ENCODE measurements at regions of chr7 and their contacts with region 1.

Region 1: DNA sequence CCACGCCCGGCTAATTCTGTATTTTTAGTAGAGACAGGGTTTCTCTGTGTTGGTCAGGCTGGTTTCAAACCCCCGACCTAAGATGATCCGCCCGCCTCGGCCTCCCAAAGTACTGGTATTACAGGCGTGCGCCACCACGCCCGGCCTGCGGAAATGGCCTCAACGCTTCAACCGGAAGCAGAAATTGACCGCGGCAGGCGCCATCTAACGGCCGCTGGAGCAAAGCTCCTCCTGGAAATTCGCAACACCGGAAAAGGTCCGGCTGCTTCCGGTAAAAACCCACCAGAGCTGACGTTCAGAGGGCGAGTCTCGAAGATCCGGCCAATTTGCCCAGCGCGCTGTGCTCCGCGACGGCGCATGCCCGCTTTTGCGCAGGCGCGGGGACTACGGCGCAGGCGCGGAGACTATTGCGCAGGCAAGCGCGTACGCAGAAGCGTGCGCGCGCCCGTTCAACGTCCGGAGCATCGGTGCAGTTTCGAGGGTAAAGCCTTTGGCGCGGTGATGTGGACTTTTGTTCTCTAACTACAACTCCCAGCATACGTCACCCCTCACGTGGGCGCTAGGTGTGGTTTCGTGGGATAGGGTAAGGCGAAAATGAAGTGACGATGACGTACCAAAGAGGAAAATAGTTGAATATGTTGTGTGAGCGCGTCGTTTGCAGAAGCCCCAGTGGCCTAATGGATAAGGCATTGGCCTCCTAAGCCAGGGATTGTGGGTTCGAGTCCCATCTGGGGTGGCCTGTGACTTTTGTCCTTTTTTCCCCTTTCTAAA is 915 bp upstream of the FMC1 start:
- DNase-seq: peak; percentile 96 to 100 (median 96)
- ATAC-seq: peak; percentile 83
- H3K4me3 ChIP-seq: peak overlapping the region; percentile 81
- H3K27ac ChIP-seq: peak overlapping the region; percentile 99
- H3K4me1 ChIP-seq: peaks cover 4% of the 10 kb centered on the region in 2 experiments; a peak in 2 of 5 replicates
- H3K27me3 ChIP-seq: no peaks in the 10 kb centered on the region
- CTCF ChIP-seq: peak; percentile 93 to 95 (median 93)
- EP300 ChIP-seq: peak; percentile 81
- POLR2A ChIP-seq: peak; percentile 89
- RAD21 ChIP-seq: peak; percentile 27 to 50; a peak in 3 of 4 replicates

Region 2: DNA sequence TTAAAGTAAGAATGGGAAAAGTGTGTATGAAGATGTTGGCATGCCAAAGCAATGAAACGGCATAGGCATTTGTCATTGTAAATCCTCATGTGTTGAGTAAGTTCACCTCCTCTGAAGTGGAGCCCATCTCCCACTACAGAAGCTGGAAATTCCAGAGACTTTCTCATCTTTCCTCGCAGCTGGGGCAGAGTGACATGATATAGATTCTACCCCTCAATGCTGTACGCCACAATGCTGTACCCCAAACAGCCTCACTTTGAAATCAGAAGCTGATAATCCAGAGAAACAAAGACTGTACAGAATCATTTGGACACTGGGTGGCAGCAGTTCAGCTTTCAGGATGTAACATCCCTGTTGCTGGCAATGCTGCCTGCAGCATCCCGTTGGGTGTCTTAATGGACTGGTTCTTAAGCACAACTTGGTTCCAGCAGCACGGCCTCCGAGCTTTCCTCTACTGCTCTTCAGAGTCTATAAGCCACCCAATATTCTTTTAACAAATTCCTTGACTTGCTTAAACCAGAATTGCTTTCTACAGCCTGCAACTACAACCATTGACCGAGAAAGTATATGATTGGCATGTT is 323.2 kb before region 1 on chr7:
- CTCF ChIA-PET with region 1: no interaction called
- POLR2A ChIA-PET with region 1: interaction called, 3 read pairs
- in situ Hi-C with region 1: no loop called
- intact Hi-C with region 1: loop called (anchors 5 kb)
- DNase-seq: peak; percentile 81 to 87 (median 84)
- ATAC-seq: peak; percentile 97
- H3K4me3 ChIP-seq: no peak overlapping the region
- H3K27ac ChIP-seq: no peak overlapping the region
- H3K4me1 ChIP-seq: no peaks in the 10 kb centered on the region
- H3K27me3 ChIP-seq: peaks cover 25 to 27% of the 10 kb centered on the region in 2 experiments
- CTCF ChIP-seq: peak; percentile 88 to 97 (median 91)
- EP300 ChIP-seq: no peak
- POLR2A ChIP-seq: no peak
- RAD21 ChIP-seq: peak; percentile 93 to 98

Region 3: GRCh38 chr7:139109188-139109982 is 230.8 kb before region 1 on chr7 and contains the start of gene ZC3HAV1:
- CTCF ChIA-PET with region 1: no interaction called
- POLR2A ChIA-PET with region 1: no interaction called
- in situ Hi-C with region 1: no loop called
- intact Hi-C with region 1: loop called (anchors 2 kb)
- DNase-seq: peak; percentile 85 to 94 (median 90)
- ATAC-seq: peak; percentile 91
- H3K4me3 ChIP-seq: peak within 1 kb of the TSS; percentile 87
- H3K27ac ChIP-seq: peak within 1 kb of the TSS; percentile 88
- H3K4me1 ChIP-seq: peaks cover 19 to 44% of the 10 kb centered on the region in 2 experiments
- H3K27me3 ChIP-seq: no peaks in the 10 kb centered on the region
- CTCF ChIP-seq: peak in 1 of 3 experiments; percentile 38; a peak in 5 of 6 replicates
- EP300 ChIP-seq: no peak
- POLR2A ChIP-seq: peak; percentile 93
- RAD21 ChIP-seq: peak in 1 of 2 experiments; percentile 18; a peak in 3 of 4 replicates
- polyA plus RNA-seq, gene ZC3HAV1: 11.9 to 13.4 TPM

Region 4: DNA sequence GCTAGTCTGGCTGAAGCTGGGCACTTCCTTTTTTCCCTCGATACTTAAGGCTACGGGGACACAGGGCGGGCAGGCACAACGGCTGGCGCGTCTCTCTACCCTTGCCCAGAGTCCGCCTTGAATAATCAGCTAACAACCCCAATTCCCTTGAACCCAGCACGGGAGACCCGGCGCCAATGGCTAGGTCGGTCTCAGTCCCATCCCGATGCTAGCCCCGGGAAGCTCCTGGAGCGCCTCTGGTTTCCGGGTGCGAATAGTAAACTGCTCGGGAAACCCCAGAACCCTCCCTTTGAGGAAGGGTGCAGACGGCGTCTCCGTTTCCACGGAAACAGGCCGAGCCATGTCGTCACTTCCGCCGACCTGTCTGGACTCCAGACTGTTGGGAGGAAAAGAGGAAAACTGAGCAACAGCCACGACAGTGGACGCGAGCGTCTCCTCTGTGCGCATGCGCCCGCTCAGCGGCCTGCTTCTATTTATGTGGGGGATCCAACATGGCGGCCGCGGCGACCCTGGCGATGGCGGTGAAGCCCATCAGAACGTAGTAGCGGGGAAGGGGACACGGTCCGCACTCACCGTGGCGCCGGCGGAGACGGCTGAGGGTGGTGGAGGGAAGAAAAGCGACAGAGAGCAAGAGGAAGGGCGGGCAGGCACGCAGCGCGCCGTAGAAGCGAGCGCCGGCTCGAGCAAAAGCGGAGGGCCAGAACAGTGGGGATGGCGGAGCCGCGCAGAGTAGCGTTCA is 109.3 kb before region 1 on chr7 and contains the start of gene UBN2:
- CTCF ChIA-PET with region 1: no interaction called
- POLR2A ChIA-PET with region 1: interaction called, 3 read pairs
- in situ Hi-C with region 1: no loop called
- intact Hi-C with region 1: loop called (anchors 1 kb)
- DNase-seq: peak; percentile 98 to 100 (median 99)
- ATAC-seq: peak; percentile 92
- H3K4me3 ChIP-seq: peak within 1 kb of the TSS; percentile 92
- H3K27ac ChIP-seq: peak within 1 kb of the TSS; percentile 91
- H3K4me1 ChIP-seq: peaks cover 15 to 20% of the 10 kb centered on the region in 2 experiments
- H3K27me3 ChIP-seq: no peaks in the 10 kb centered on the region
- CTCF ChIP-seq: 0 out of 6 replicates have a peak, but pooled peaks of 1 of the 3 experiments have one; percentile 1
- EP300 ChIP-seq: peak; percentile 25
- POLR2A ChIP-seq: peak; percentile 98
- RAD21 ChIP-seq: no peak; a peak in 1 of 4 replicates
- polyA plus RNA-seq, gene UBN2: 1.2 to 1.5 TPM

Region 5: GRCh38 chr7:139359366-139360209 is 19.4 kb after region 1 on chr7 and contains the start of gene LUC7L2:
- CTCF ChIA-PET with region 1: no interaction called
- POLR2A ChIA-PET with region 1: interaction called, 23 read pairs
- in situ Hi-C with region 1: no loop called
- intact Hi-C with region 1: loop called (anchors 1 kb)
- DNase-seq: peak; percentile 97 to 100 (median 98)
- ATAC-seq: peak; percentile 81
- H3K4me3 ChIP-seq: peak within 1 kb of the TSS; percentile 65
- H3K27ac ChIP-seq: peak within 1 kb of the TSS; percentile 98
- H3K4me1 ChIP-seq: peaks cover 10 to 22% of the 10 kb centered on the region in 2 experiments
- H3K27me3 ChIP-seq: no peaks in the 10 kb centered on the region
- CTCF ChIP-seq: peak in 2 of 3 experiments; percentile 38 to 65; a peak in 2 of 6 replicates
- EP300 ChIP-seq: peak; percentile 68
- POLR2A ChIP-seq: peak; percentile 100
- RAD21 ChIP-seq: no peak
- polyA plus RNA-seq, gene LUC7L2: 56.1 to 66.5 TPM

Region 6: GRCh38 chr7:139494835-139495579 is 154.8 kb after region 1 on chr7:
- CTCF ChIA-PET with region 1: no interaction called
- POLR2A ChIA-PET with region 1: no interaction called
- in situ Hi-C with region 1: no loop called
- intact Hi-C with region 1: loop called (anchors 5 kb)
- DNase-seq: no peak
- ATAC-seq: no peak
- H3K4me3 ChIP-seq: no peak overlapping the region
- H3K27ac ChIP-seq: no peak overlapping the region
- H3K4me1 ChIP-seq: peaks cover 0 to 4% of the 10 kb centered on the region in 2 experiments; a peak in 2 of 5 replicates
- H3K27me3 ChIP-seq: peaks cover 37 to 55% of the 10 kb centered on the region in 2 experiments
- CTCF ChIP-seq: no peak
- EP300 ChIP-seq: no peak
- POLR2A ChIP-seq: no peak
- RAD21 ChIP-seq: no peak

Measured in K562 (cell line).